GM23248 (cell line): ENCODE measurements at regions of chr1 and their contacts with region 1.

Region 1: DNA sequence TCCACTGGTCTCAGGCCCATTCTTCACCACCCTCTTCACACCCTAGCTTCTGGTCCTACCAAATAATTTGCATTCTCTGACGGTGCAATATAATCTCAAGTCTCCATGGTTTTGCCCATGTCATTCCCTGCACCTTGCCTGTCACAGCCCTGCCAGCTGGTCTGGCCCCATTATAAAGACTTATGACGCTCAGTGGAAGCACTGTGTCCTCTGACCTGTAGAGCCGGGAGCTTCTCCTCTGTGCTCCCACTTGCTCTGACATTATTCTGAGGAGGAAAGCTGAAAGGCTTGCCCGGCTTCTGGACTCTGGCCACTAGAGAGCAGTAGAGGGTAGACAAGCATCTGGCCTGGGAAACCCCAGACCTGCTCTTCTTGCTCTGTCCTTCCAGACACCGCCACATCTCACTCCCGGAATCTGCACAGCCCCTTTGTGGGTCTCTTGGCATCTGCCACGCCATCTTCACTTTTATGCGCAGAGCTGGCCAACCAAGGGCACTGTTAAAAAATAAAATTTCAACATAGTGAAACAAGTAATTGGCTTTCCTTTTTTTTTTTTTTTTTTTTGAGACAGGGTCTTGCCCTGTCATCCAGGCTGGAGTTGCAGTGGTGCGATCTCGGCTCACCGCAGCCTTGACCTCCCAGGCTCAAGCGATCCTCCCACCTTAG is 44.4 kb downstream of the NENF start:
- DNase-seq: peak; percentile 92
- H3K4me3 ChIP-seq: no peak overlapping the region
- H3K27ac ChIP-seq: no peak overlapping the region
- H3K4me1 ChIP-seq: peaks cover 2% of the 10 kb centered on the region
- H3K27me3 ChIP-seq: peaks cover 28% of the 10 kb centered on the region

Region 2: DNA sequence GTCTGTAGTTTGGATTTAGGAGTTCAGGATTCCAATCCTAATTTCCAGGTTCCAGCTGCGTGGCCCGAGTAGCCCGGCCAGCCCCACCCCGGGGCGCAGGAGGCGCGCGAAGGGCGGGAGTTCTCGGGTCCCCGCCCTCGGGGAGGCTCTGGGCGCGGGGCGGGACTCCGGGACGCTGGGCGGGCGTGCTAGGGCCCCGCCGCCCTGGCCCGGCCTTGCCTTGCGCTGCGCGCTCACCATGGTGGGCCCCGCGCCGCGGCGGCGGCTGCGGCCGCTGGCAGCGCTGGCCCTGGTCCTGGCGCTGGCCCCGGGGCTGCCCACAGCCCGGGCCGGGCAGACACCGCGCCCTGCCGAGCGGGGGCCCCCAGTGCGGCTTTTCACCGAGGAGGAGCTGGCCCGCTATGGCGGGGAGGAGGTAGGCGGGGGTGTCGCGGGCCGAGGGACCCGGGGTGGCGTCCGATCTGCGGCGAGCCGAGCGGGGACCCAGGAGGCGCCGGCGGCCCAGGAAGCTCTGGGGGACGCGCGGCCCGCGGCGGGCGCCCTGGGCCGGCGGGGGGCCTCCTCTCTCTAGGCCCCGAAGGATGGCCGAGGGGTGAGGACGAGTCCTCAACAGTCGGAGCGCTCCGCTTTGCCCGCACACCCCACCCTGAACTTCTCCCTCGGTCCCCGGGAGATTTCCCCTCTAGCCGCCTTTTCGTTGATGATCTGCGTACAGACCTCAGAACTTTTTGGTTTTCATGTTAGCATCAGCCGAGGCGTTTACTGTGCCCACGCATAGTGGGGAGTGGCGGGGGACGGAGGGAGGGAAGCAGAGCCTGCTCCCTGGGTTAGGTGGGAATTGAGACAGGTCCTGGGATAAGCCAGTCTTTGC is 44.2 kb before region 1 on chr1 and contains the start of gene NENF:
- in situ Hi-C with region 1: no loop called
- DNase-seq: peak; percentile 97
- H3K4me3 ChIP-seq: peak within 1 kb of the TSS; percentile 69
- H3K27ac ChIP-seq: peak within 1 kb of the TSS; percentile 31
- H3K4me1 ChIP-seq: peaks cover 18% of the 10 kb centered on the region
- H3K27me3 ChIP-seq: no peaks in the 10 kb centered on the region
- total RNA-seq, gene NENF: 63.2 and 86.9 TPM in 2 replicates

Region 3: GRCh38 chr1:212760126-212760823 is 283.1 kb after region 1 on chr1:
- in situ Hi-C with region 1: loop called (anchors 10 kb)
- DNase-seq: peak; percentile 51
- H3K4me3 ChIP-seq: no peak overlapping the region
- H3K27ac ChIP-seq: no peak overlapping the region
- H3K4me1 ChIP-seq: no peaks in the 10 kb centered on the region
- H3K27me3 ChIP-seq: no peaks in the 10 kb centered on the region